ENCODE measurements at regions of chr1 and their contacts with region 1.

Region 1: DNA sequence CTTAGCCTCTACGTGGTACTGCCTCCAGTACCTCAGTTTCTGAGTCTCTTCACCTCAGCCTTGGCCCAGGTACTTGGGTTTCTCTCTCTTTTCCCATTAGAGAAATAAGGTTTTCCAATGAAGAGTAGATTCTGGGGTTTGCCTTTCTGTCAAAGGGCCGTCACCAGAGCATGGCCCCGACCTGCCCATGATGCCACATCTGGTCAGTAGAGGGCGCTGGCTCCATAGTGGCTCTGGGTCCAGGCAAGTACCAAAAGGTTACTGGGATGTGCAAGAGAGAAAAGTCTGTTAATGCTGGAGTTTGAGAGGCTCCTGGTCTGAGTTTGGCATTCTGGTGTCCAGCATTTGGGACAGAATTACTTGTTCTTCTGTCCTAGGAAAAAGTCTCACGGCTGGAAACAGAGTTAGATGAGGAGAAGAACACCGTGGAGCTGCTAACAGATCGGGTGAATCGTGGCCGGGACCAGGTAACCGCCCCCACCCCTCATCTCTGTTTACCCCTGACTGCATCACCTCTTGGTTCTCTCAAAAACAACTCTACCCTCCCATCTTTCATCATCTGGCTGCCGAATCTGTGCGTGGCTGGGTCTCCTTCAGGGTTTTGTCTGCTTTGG is 5.3 kb upstream of the TUFT1 start:
- DNase-seq: no peak
- H3K4me3 ChIP-seq: no peak overlapping the region
- H3K27ac ChIP-seq: no peak overlapping the region
- H3K27me3 ChIP-seq: no peaks in the 10 kb centered on the region
- CTCF ChIP-seq: peak; percentile 96

Region 2: DNA sequence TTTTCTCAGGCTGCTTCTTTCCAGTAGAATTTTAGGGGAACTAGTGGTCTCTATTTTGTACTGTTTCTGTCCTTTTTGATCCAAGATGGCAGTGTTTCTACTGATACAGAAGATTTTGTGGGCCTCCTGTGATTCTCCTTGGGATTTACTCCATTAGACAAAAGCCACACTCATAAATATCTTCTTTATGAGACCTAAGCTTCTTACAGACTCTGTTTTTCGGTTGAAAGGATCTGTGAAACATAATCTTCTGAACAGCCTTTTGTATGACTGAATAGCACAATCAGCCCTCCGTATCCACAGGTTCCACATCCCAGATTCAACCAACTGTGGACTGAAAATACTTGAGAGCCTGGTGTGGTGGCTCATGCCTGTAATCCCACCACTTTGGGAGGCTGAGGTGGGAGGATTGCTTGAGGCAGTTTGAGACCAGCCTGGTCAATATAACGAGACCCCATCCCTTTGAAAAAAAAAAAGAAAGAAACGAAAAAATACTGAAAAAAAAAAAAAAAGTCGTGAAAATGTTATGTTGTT is 291.0 kb before region 1 on chr1:
- CTCF ChIA-PET with region 1: no interaction called
- POLR2A ChIA-PET with region 1: no interaction called
- DNase-seq: no peak
- H3K4me3 ChIP-seq: no peak overlapping the region
- H3K27ac ChIP-seq: no peak overlapping the region
- H3K27me3 ChIP-seq: no peaks in the 10 kb centered on the region
- CTCF ChIP-seq: no peak

Region 3: DNA sequence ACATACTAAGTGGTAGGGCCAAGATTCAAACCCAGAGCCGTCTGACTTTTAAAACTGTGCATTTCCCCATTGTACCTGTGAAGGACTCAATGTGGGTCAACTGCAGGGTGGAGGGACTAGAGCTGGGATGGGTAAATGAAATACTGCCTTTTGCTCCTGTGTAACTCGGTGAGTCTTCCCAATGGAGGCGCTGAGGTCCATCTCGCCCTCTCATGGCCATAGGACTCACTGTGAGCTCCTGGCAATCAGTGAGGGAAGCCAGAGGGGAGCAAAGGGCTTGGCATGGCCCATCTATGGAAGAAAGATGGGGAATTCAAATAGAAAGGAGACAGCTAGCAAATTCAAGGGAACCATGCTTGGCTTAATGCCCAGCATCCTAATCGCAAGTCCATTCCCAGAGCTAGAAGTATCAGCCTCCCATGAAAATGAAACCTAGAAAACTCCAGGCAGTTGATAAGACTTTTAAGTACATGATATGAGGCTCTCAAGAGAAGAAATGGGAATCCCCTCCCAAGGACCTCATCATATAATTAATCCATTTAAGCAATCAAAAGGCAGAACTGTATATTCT is 49.0 kb before region 1 on chr1:
- CTCF ChIA-PET with region 1: interaction called, 13 read pairs
- POLR2A ChIA-PET with region 1: no interaction called
- DNase-seq: no peak
- H3K4me3 ChIP-seq: no peak overlapping the region
- H3K27ac ChIP-seq: no peak overlapping the region
- H3K27me3 ChIP-seq: no peaks in the 10 kb centered on the region
- CTCF ChIP-seq: no peak

Region 4: DNA sequence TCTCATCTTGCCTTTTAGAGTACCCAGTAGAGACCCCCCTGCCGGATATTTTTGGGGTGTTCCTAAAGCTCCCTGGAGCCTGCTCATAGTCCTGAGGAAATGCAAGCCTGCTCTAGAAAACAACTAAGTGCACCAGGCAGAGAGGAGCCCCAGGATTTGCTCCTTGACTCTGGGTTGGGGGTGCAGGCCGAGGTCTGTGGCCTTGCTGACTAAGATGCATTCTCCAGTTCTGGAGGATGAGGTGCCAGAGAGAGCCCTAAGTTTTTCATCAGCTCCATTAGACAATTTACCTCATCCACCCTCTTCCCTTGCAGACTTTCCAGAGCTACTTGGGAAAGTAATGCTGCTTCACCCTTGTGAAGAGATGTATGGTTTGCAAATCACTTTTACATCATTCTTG is 14.4 kb after region 1 on chr1:
- CTCF ChIA-PET with region 1: interaction called, 13 read pairs
- POLR2A ChIA-PET with region 1: interaction called, 12 read pairs
- DNase-seq: no peak
- H3K4me3 ChIP-seq: no peak overlapping the region
- H3K27ac ChIP-seq: peak overlapping the region; percentile 73
- H3K27me3 ChIP-seq: no peaks in the 10 kb centered on the region
- CTCF ChIP-seq: no peak

Region 5: DNA sequence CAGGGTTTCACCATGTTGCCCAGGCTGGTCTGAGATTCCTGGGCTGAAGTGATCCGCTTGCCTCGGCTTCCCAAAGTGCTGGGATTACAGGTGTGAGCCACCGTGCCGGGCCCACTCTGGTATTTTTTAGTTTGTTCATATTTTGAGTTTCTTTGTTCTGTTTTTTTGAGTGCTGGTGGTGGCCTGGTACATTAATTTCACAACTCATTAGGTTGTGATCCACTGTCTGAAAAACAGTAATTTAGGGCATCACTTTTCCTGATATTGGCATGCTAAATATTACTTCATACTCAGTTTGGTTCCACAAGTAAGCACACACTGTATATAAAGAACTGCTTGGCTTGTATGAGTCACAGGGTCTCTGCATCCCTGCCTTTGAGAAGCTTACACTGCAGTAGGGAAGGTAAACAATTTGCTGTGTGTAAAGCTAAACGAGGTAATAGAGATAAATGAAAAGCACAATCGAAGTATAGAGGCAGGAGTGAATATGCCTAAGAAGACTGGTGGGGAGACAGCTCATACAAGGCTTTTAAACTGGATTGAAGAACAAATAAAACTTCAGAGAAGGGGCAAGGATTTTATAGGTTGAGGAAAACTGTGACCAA is 84.8 kb after region 1 on chr1:
- CTCF ChIA-PET with region 1: interaction called, 4 read pairs
- POLR2A ChIA-PET with region 1: interaction called, 10 read pairs
- DNase-seq: peak; percentile 56
- H3K4me3 ChIP-seq: peak overlapping the region; percentile 20
- H3K27ac ChIP-seq: peak overlapping the region; percentile 53
- H3K27me3 ChIP-seq: no peaks in the 10 kb centered on the region
- CTCF ChIP-seq: no peak

Region 6: GRCh38 chr1:151728151-151729054 is 193.6 kb after region 1 on chr1:
- CTCF ChIA-PET with region 1: interaction called, 10 read pairs
- POLR2A ChIA-PET with region 1: no interaction called
- DNase-seq: peak; percentile 16
- H3K4me3 ChIP-seq: no peak overlapping the region
- H3K27ac ChIP-seq: no peak overlapping the region
- H3K27me3 ChIP-seq: peaks cover 44% of the 10 kb centered on the region
- CTCF ChIP-seq: no peak